T-cell (primary cell): ENCODE measurements at regions of chr18 and their contacts with region 1.

Region 1: GRCh38 chr18:4821801-4822200 is 366.7 kb upstream of the DLGAP1 start:
- DNase-seq: no peak
- ATAC-seq: no peak
- H3K4me3 ChIP-seq: no peak overlapping the region
- H3K4me3 Mint-ChIP-seq: no peak overlapping the region
- H3K27ac ChIP-seq: no peak overlapping the region
- H3K27ac Mint-ChIP-seq: no peak overlapping the region
- H3K4me1 ChIP-seq: no peaks in the 10 kb centered on the region
- H3K4me1 Mint-ChIP-seq: no peaks in the 10 kb centered on the region
- H3K27me3 ChIP-seq: no peaks in the 10 kb centered on the region
- H3K27me3 Mint-ChIP-seq: no peaks in the 10 kb centered on the region

Region 2: DNA sequence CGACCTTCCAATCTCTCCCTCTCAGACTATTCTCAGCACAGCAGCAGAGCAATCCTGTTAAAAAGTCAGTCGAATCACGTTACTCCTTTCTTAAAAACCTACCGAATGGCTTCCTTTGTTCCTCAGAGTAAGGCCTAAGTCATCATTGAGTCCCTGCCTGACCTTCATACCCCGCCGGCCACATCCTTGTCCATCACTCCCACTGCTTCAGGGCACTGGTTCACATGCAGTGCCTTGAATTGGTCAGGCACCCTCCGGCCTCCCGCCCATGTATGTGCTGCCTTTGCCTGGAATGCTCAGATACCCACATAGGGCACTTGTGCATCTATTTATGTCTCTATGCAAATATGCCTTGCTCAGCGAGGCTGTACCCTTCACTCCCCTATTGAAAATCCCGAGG is 573.1 kb before region 1 on chr18:
- CTCF ChIA-PET with region 1: interaction called in 1 of 2 experiments, 10 read pairs
- POLR2A ChIA-PET with region 1: no interaction called
- DNase-seq: no peak
- ATAC-seq: no peak
- H3K4me3 ChIP-seq: no peak overlapping the region
- H3K4me3 Mint-ChIP-seq: no peak overlapping the region
- H3K27ac ChIP-seq: no peak overlapping the region
- H3K27ac Mint-ChIP-seq: no peak overlapping the region
- H3K4me1 ChIP-seq: no peaks in the 10 kb centered on the region
- H3K4me1 Mint-ChIP-seq: no peaks in the 10 kb centered on the region
- H3K27me3 ChIP-seq: no peaks in the 10 kb centered on the region
- H3K27me3 Mint-ChIP-seq: no peaks in the 10 kb centered on the region

Region 3: GRCh38 chr18:4842287-4842686 is 20.5 kb after region 1 on chr18:
- CTCF ChIA-PET with region 1: no interaction called
- POLR2A ChIA-PET with region 1: no interaction called
- DNase-seq: no peak
- ATAC-seq: no peak
- H3K4me3 ChIP-seq: no peak overlapping the region
- H3K4me3 Mint-ChIP-seq: no peak overlapping the region
- H3K27ac ChIP-seq: no peak overlapping the region
- H3K27ac Mint-ChIP-seq: no peak overlapping the region
- H3K4me1 ChIP-seq: no peaks in the 10 kb centered on the region
- H3K4me1 Mint-ChIP-seq: no peaks in the 10 kb centered on the region
- H3K27me3 ChIP-seq: no peaks in the 10 kb centered on the region
- H3K27me3 Mint-ChIP-seq: no peaks in the 10 kb centered on the region